ENCODE measurements at regions of chr7 and their contacts with region 1.

Region 1: GRCh38 chr7:8022628-8023027 is 54.0 kb downstream of the GLCCI1 start:
- DNase-seq: no peak
- ATAC-seq: no peak
- H3K4me3 ChIP-seq: no peak overlapping the region
- H3K27ac ChIP-seq: no peak overlapping the region
- H3K4me1 ChIP-seq: no peaks in the 10 kb centered on the region
- H3K27me3 ChIP-seq: no peaks in the 10 kb centered on the region

Region 2: DNA sequence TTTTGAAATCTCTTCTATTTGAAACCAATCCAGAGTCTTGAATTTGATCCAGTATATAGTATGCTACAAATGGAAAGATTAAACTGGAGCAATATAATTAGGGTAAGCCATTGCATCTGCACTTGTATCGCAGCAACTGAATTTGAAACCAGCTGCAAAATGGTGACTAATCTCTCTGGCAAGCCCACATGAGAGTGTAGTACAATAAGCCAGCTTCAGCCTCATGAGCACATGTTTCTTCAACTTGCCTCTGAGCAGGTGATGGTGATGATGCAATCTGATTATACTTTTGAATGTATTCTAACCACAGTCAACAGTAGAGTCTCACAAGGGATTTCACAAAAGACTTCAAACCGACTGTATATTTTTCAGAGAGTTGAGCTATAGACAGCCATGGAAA is 303.4 kb before region 1 on chr7:
- intact Hi-C with region 1: no loop called
- DNase-seq: no peak
- ATAC-seq: peak in 1 of 2 donors; percentile 59
- H3K4me3 ChIP-seq: no peak overlapping the region
- H3K27ac ChIP-seq: no peak overlapping the region
- H3K4me1 ChIP-seq: no peaks in the 10 kb centered on the region
- H3K27me3 ChIP-seq: no peaks in the 10 kb centered on the region

Region 3: DNA sequence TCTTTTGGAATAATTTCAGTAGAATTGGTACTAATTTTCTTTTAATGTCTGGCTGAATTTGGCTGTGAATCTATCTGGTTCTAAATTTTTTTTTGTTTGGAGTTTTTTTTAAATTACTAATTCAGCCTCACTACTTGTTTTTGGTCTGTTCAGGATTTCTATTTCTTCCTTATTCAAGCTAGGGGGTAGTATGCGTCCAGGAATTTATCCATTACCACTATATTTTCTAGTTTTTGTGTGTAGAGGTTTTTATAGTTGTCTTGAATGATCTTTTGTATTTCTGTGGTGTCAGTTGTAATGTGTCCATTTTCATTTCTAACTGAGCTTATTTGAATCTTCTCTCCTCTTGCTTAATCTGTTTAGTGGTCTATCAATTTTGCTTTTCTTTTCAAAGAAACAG is 288.2 kb after region 1 on chr7:
- intact Hi-C with region 1: loop called in 1 of 4 experiments (anchors 10 kb)
- DNase-seq: no peak
- ATAC-seq: no peak
- H3K4me3 ChIP-seq: no peak overlapping the region
- H3K27ac ChIP-seq: no peak overlapping the region
- H3K4me1 ChIP-seq: no peaks in the 10 kb centered on the region
- H3K27me3 ChIP-seq: no peaks in the 10 kb centered on the region

Region 4: DNA sequence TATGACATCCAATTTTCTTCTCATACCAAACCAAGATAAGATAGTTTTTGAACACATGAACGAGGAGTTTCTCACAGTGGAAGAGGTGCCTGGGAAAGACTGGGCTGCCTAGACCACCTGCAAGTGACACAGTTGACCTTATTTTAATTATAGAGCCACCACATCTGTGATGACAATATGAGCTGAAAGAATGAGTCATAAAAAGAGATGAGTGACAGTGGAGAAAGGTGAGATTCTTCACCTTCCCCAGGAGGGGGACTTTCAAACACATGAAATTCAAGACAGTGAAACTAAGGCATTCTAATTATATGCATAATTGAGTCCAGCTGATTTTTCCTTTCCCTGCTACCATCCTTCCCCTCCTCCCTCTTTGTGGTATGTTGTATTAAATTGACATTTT is 886.3 kb after region 1 on chr7:
- intact Hi-C with region 1: no loop called
- DNase-seq: no peak
- ATAC-seq: no peak
- H3K4me3 ChIP-seq: no peak overlapping the region
- H3K27ac ChIP-seq: no peak overlapping the region
- H3K4me1 ChIP-seq: no peaks in the 10 kb centered on the region
- H3K27me3 ChIP-seq: no peaks in the 10 kb centered on the region